HepG2 (cell line): ENCODE measurements at regions of chr20 and their contacts with region 1.

Region 1: DNA sequence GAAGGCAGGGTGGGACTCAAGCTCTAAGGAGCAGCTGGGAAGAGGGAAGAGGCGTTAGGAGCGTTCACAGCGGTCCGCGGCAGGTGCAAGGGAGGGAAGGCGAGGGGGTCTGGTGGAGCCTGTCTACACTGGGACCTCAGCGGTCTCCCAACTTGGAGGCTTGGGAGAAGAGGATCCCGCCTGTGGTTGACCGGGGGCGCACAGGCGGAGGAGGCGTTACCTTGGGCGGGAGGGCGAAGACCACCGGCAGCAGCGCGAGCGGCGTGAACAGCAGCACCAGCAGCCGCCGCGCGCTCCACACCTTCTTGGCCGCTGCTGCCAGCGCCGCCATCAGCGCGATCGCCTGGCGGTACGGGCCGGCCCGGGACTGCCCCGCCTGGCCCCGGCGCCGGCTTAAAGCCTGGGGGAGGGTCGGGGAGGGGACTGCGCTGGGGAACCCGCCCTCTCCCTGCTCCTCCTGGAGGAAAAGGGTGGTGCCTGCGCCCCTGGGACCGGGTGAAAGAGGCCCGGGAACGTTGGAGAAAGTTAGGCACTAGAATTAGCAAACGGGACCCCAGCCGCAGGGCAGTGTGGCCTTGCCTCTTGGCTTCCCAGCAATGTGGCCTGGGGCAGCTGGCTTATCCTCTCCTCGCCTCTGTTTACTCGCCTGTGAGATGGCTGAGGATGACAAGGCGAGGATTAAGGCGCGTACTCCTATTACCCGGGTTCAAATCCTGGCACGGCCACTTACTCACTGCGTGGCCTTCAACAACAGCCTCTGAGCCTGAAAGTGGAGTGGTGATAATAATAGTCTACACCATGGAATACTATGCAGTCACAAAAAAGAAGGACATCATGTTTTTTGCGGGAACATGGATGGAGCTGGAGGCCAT is at the start of gene SLC13A3:
- DNase-seq: peak; percentile 79
- ATAC-seq: peak; percentile 95
- H3K4me3 ChIP-seq: peak within 1 kb of the TSS; percentile 64 to 83 (median 66)
- H3K27ac ChIP-seq: peak within 1 kb of the TSS; percentile 72
- H3K4me1 ChIP-seq: peaks cover 68% of the 10 kb centered on the region
- H3K27me3 ChIP-seq: no peaks in the 10 kb centered on the region
- CTCF ChIP-seq: peak; percentile 10
- EP300 ChIP-seq: 0 out of 4 replicates have a peak, but pooled peaks of 1 of the 2 experiments have one; percentile 9
- POLR2A ChIP-seq: peak; percentile 92 to 96
- RAD21 ChIP-seq: peak; percentile 82
- total RNA-seq, gene SLC13A3: 27.9 and 66.5 TPM in 2 replicates

Region 2: DNA sequence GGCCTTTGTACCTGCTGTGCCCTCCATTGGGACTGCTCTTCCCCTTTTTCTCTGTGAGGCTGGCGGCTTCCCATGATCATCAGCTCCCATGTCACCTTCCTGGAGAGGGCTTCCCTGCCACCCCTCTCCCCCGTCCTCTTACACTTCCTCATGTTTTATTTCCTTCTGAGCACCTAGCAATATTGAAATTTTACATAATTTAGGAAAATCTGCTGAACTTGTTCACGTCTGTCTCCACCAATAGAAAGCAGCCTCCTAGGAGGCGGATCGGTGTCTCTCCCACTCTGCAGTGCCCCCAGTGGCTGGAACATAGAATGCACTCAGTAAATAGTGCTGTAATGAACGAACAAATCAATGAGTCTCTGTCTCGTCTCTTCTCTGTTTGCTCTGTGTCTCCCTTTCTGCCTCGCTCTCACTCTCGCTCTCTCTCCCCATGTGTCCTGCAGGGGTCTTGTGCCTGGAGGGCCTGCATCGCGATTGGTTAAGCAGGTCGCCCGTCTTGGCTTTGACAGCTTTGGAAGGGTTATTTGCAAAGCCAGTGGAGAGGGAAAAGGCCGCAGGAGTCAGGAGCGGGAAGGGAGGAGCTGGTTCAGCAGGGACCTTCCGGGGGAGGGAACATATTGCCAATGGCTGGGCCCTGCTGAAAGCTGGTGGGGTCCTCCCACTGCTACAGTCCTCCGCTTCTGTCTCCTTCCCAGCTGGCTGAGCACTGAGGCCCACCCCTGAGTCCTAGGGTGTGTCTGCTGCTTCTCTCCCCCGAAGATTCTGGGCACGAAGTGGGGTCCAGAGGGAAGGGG is 88.8 kb before region 1 on chr20:
- CTCF ChIA-PET with region 1: interaction called, 3 read pairs
- POLR2A ChIA-PET with region 1: interaction called, 4 read pairs
- in situ Hi-C with region 1: no loop called
- intact Hi-C with region 1: loop called (anchors 1 kb)
- DNase-seq: peak; percentile 87
- ATAC-seq: peak; percentile 74
- H3K4me3 ChIP-seq: peak overlapping the region; percentile 24 to 58 (median 29); a peak in 5 of 6 replicates
- H3K27ac ChIP-seq: peak overlapping the region; percentile 55
- H3K4me1 ChIP-seq: peaks cover 72% of the 10 kb centered on the region
- H3K27me3 ChIP-seq: no peaks in the 10 kb centered on the region
- CTCF ChIP-seq: peak; percentile 93
- EP300 ChIP-seq: peak; percentile 41 to 46; a peak in 2 of 4 replicates
- POLR2A ChIP-seq: no peak; a peak in 1 of 4 replicates
- RAD21 ChIP-seq: peak; percentile 65; the same call in 1 of the 2 replicates

Region 3: GRCh38 chr20:46607849-46608497 is 43.4 kb before region 1 on chr20:
- CTCF ChIA-PET with region 1: no interaction called
- POLR2A ChIA-PET with region 1: interaction called, 17 read pairs
- in situ Hi-C with region 1: no loop called
- intact Hi-C with region 1: loop called (anchors 2 kb)
- DNase-seq: peak; percentile 68
- ATAC-seq: peak; percentile 54
- H3K4me3 ChIP-seq: peak overlapping the region in 1 of 3 experiments; percentile 32; a peak in 2 of 6 replicates
- H3K27ac ChIP-seq: peak overlapping the region; percentile 80
- H3K4me1 ChIP-seq: peaks cover 65% of the 10 kb centered on the region
- H3K27me3 ChIP-seq: no peaks in the 10 kb centered on the region
- CTCF ChIP-seq: peak; percentile 62
- EP300 ChIP-seq: peak in 1 of 2 experiments; percentile 25; a peak in 1 of 4 replicates
- POLR2A ChIP-seq: no peak
- RAD21 ChIP-seq: no peak

Region 4: GRCh38 chr20:46638134-46638897 is 13.0 kb before region 1 on chr20:
- CTCF ChIA-PET with region 1: no interaction called
- POLR2A ChIA-PET with region 1: interaction called, 72 read pairs
- in situ Hi-C with region 1: no loop called
- intact Hi-C with region 1: loop called (anchors 1 kb)
- DNase-seq: peak; percentile 89
- ATAC-seq: peak; percentile 86
- H3K4me3 ChIP-seq: peak overlapping the region in 1 of 3 experiments; percentile 47; a peak in 1 of 6 replicates
- H3K27ac ChIP-seq: peak overlapping the region; percentile 75
- H3K4me1 ChIP-seq: peaks cover 100% of the 10 kb centered on the region
- H3K27me3 ChIP-seq: no peaks in the 10 kb centered on the region
- CTCF ChIP-seq: peak; percentile 23; the same call in 1 of the 2 replicates
- EP300 ChIP-seq: peak; percentile 45 to 65; a peak in 2 of 4 replicates
- POLR2A ChIP-seq: peak in 1 of 2 experiments; percentile 42; a peak in 1 of 4 replicates
- RAD21 ChIP-seq: peak; percentile 57

Region 5: DNA sequence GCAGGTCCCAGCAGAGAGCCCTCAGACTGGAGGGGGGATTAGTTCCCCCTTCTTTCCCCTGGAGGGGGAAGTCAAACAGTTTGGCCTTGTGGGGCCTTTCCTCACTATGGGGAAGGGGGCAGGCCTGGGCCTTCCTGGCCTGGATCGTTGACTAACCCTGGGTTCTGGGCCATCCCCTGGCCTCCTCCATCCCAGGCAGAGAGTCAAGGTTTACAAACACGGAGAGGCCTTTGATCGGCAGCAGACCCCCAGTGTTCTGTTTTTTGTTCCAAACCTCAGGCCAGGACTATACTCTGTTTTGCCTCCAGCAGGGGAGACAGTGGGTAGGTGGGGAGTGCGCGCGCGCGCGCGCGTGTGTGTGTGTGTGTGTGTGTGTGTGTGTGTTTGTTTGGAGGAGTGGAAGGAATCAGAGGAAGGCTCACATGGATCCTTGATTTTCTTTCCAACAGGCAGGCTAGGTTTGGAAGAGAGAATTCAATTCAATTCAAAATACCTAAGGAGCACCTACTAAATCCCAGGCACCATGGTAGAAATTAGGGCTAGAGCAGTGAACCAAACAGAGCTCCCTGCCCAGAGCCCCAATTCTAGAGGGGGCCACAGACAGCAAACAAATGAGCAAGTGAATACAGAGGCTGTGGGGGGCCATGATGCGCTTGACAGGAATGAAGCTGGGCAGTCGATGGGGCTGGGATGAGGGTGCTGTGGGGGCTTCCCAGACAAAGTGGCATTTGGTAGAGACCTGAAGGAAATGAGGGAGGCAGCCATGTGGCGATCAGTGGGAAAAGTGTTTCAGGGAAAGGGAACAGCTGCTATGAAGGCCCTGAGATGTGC is 23.1 kb after region 1 on chr20:
- CTCF ChIA-PET with region 1: no interaction called
- POLR2A ChIA-PET with region 1: interaction called, 56 read pairs
- in situ Hi-C with region 1: no loop called
- intact Hi-C with region 1: no loop called
- DNase-seq: peak; percentile 100
- ATAC-seq: peak; percentile 89
- H3K4me3 ChIP-seq: peak overlapping the region in 1 of 3 experiments; percentile 53; a peak in 2 of 6 replicates
- H3K27ac ChIP-seq: peak overlapping the region; percentile 84
- H3K4me1 ChIP-seq: peaks cover 96% of the 10 kb centered on the region
- H3K27me3 ChIP-seq: no peaks in the 10 kb centered on the region
- CTCF ChIP-seq: peak; percentile 53
- EP300 ChIP-seq: peak; percentile 55 to 95; a peak in 3 of 4 replicates
- POLR2A ChIP-seq: no peak
- RAD21 ChIP-seq: peak; percentile 77

Region 6: GRCh38 chr20:46689082-46689754 is 37.9 kb after region 1 on chr20 and contains the start of gene TP53RK:
- CTCF ChIA-PET with region 1: no interaction called
- POLR2A ChIA-PET with region 1: interaction called, 10 read pairs
- in situ Hi-C with region 1: loop called (anchors 5 kb)
- intact Hi-C with region 1: no loop called
- DNase-seq: peak; percentile 81
- ATAC-seq: peak; percentile 93
- H3K4me3 ChIP-seq: peak within 1 kb of the TSS; percentile 69 to 90 (median 87)
- H3K27ac ChIP-seq: peak within 1 kb of the TSS; percentile 72
- H3K4me1 ChIP-seq: peaks cover 65% of the 10 kb centered on the region
- H3K27me3 ChIP-seq: peaks cover 0 to 5% of the 10 kb centered on the region in 2 experiments; a peak in 1 of 5 replicates
- CTCF ChIP-seq: peak; percentile 5; the same call in 1 of the 2 replicates
- EP300 ChIP-seq: no peak
- POLR2A ChIP-seq: peak; percentile 82 to 89
- RAD21 ChIP-seq: peak; percentile 62
- total RNA-seq, gene TP53RK: 25.5 and 31.0 TPM in 2 replicates